ENCODE measurements at regions of chr19 and their contacts with region 1.

Region 1: DNA sequence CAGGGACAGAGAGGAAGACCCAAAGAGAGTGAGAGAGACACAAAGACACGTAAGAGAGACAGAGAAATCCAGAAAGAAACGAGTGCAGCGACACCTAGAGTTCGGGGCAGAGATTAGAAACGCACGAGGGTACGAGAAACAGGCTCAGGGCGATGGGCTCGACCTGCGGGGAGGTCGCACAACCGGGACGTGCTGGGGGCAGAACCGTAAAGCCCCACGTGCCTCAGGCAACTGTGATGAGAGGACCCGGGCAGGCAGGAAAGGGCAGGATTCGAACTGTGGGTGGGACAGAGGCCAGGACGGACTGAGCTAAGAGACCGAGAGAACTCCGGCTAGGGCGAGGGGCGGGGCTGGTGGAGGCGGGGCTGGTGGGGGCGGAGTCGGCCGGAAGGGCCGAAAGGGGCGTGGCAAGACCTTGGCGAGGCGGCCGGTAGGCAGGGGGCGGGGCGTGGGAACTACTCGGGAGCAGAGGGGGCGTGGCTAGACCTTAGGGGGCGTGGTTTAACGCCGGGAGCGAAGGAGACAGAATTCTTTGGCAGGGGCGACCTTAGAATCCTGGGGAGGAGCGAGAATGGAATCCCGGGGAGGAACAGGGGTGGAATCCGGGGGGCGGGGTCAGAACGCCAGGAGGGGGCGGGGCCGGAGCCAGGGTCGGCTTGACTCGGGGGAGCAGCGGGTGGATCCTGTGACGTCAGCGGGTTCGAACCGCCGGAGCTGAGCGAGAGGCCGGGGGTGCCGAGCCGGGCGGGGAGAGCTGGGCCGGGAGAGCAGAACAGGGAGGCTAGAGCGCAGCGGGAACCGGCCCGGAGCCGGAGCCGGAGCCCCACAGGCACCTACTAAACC is at the start of gene NECTIN2:
- DNase-seq: peak; percentile 100
- H3K4me3 ChIP-seq: peak within 1 kb of the TSS; percentile 82 to 100 (median 99)
- H3K27ac ChIP-seq: peak within 1 kb of the TSS; percentile 95 to 98 (median 98)
- H3K4me1 ChIP-seq: peaks cover 37 to 57% (median 48%) of the 10 kb centered on the region in 4 donors
- H3K27me3 ChIP-seq: no peaks in the 10 kb centered on the region
- CTCF ChIP-seq: peak; percentile 62 to 84 (median 67)
- EP300 ChIP-seq: no peak
- POLR2A ChIP-seq: peak; percentile 91
- total RNA-seq, gene NECTIN2: 34.5 to 72.4 (median 60.1) TPM

Region 2: GRCh38 chr19:44800461-44800860 is 45.4 kb before region 1 on chr19:
- intact Hi-C with region 1: loop called (anchors 1 kb)
- DNase-seq: peak; percentile 96
- H3K4me3 ChIP-seq: no peak overlapping the region
- H3K27ac ChIP-seq: no peak overlapping the region
- H3K4me1 ChIP-seq: peaks cover 13 to 23% (median 18%) of the 10 kb centered on the region in 4 donors
- H3K27me3 ChIP-seq: no peaks in the 10 kb centered on the region
- CTCF ChIP-seq: peak; percentile 87 to 92 (median 90)
- EP300 ChIP-seq: no peak
- POLR2A ChIP-seq: no peak

Region 3: GRCh38 chr19:44866664-44867063 is 20.8 kb after region 1 on chr19:
- intact Hi-C with region 1: no loop called
- DNase-seq: no peak
- H3K4me3 ChIP-seq: no peak overlapping the region
- H3K27ac ChIP-seq: peak overlapping the region in 2 of 4 donors; percentile 1 to 14
- H3K4me1 ChIP-seq: peaks cover 0 to 27% (median 17%) of the 10 kb centered on the region in 4 donors
- H3K27me3 ChIP-seq: no peaks in the 10 kb centered on the region
- CTCF ChIP-seq: no peak
- EP300 ChIP-seq: no peak
- POLR2A ChIP-seq: no peak

Measured in esophagus muscularis mucosa (tissue), 4 donors.